GM18951 (cell line): ENCODE measurements at regions of chr11 and their contacts with region 1.

Region 1: GRCh38 chr11:65988791-65989592 is 13.0 kb downstream of the EIF1AD start:
- POLR2A ChIP-seq: no peak

Region 2: GRCh38 chr11:65401073-65401802 is 587.8 kb before region 1 on chr11:
- in situ Hi-C with region 1: no loop called
- POLR2A ChIP-seq: no peak

Region 3: DNA sequence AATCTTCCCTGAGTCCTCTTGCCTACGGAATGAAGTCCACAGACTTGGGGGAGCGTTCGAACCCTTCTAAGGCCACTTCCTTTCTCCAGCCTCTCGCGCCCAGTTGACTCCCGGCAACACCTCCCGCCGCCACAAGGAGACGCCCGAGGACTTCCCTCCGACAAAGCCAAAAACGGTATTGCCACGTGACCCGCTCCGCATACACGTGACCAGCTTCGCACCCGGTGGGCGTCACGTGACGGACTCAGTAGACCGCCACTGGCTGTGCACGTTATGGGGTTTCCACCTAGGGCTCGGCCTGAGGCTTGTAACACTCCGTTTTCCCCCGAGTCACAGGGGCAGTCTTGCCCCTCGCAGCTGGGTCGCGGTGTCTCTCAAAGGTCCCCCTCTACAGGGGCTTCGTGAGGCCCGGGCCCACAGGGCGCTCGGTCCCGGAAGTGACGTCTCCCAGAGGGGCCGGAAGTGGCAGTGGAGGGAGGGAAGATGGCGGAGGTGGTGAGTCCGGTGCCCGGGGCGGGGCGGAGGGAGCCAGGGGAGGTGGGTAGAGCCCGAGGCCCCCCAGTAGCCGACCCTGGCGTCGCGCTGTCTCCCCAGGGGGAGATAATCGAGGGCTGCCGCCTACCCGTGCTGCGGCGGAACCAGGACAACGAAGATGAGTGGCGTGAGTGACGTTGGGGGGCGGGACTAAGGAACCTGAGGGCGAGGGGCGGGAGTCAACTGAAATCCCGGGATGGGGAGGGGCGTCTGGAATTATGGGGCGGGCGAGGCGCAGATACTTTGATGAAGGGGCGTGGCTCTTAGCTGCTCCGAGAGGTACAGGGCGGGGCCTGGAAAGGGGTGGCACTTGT is 277.0 kb before region 1 on chr11 and contains the start of gene KAT5:
- in situ Hi-C with region 1: loop called (anchors 25 kb)
- POLR2A ChIP-seq: peak; percentile 75

Region 4: GRCh38 chr11:65884686-65885092 is 104.3 kb before region 1 on chr11:
- in situ Hi-C with region 1: loop called (anchors 5 kb)
- POLR2A ChIP-seq: no peak

Region 5: DNA sequence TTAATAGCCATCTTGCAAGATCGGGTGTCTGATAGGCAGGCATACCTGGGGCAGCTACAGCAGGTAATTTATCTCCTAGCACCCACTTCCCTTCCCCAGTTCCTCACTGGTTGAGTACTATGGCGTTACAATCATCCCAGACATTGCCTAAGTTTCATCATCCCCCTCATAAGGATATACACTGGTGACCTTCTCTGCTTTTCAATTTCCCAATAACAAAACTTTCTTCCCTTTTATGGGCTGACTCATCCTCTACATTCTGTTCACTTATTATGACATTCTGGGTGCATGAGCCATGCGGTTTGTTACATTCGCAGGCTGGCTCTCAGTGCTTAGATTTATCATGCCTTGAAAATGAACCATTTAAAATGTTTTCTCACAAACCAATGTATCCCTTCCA is 454.6 kb after region 1 on chr11:
- in situ Hi-C with region 1: no loop called
- POLR2A ChIP-seq: no peak